ENCODE measurements at regions of chr11 and their contacts with region 1.

Region 1: DNA sequence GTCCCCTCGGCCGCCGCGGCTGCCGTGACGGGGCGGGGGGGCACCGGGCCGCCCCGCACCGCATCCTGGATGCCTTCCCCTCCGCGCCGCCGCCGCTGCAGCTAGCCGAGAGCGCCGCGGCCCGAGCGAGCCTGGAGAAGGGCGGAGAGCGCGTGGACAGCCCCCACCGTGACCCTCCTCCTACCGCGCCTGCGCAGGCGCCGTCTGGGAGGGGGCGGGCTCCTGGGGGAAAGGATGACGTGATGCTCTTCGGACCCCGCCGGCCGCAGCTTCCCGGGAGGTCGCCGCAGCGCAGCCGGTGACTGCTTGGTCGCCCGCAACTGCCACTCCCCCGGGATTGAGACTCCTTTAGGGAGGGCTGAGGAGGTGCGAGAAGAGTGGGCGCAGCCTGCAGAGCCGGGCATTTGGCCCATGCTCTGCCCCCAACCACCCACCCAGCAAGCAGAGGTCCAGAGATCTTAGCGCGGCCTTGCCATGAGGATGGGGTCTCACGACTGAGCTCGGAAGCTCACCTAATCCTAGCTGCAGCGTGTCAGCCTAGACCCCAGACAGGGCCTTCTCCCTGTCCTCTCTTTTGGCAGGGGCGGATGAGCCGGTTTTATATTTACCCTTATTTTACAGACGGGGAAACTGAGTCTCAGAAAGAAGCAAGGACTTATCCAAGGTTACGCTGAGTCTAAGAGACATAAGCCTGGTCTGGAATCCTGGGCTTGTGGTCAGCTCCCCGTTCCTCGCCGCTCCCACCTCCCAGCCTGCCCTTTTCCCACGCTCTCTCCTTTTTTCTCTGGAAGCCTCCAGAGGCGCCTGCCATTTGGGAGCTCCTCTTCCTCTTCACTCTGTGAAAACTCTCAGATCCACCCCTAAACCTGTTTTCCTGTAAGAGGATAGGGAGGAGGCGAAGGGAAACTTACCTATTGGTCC is at the start of gene DENND5A:
- DNase-seq: peak; percentile 80 to 97 (median 87)

Region 2: DNA sequence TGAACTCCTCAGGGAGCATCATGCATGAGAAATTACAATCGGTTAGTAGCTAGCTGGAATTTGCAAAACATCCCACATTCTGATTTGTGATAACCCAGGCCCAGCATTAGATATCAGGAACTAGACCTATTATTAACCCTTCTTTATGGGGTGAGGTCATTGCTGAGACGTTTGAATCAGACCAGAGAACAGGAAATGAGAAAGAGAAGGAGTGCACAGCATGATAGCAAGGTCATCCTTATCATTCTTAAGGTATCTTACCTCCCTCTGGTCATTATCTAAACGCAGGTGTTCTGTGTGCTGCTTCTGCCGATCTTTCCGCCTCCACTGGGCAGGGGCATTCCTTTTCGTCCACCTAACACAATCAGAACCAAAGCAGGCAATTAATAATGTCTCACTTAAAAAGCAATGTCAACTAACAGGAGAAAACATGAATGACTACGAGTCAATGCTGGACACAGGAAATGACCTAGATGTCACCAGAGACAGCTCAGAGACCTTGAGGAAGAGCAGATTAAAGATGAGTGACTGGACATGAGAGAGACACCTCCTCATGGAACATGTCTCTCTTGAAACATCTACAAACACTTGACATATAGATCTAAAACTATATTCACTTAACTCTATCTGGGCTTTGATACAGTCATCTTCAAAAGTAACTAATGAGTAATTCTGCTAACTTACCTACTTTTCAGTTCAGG is 95.7 kb before region 1 on chr11:
- intact Hi-C with region 1: loop called (anchors 5 kb)
- DNase-seq: no peak

Region 3: DNA sequence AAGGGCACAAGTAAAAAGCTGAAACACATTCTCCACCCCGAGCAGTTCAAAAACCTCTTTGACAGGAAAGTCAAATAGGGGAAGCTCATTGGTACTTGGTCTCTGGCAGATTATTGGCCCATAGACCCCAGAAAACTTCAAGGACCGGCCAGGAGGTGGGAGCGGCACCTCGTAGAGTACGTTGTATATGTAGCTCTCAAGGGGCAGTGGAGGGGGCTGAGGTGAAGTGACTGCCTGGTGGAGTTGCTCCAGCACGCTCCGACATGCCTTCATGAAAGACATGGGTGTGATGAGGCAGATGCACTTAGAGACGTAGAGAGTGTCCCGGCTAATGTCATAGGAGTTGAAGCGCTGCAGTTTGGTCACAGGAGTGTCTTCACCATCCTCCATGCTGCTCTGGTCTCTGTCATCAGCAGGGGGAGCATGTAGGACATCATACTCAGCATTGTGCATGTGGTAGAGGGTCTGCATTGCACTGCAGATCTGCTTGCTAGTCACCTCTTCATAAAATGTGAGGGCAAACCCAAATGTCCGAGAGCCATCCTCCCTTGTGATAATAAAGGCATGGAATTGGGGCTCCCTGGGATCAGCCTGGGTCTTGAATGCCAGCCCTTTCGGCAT is 61.7 kb before region 1 on chr11:
- intact Hi-C with region 1: loop called (anchors 2 kb)
- DNase-seq: peak in 6 of 10 donors; percentile 13 to 69 (median 28)

Region 4: DNA sequence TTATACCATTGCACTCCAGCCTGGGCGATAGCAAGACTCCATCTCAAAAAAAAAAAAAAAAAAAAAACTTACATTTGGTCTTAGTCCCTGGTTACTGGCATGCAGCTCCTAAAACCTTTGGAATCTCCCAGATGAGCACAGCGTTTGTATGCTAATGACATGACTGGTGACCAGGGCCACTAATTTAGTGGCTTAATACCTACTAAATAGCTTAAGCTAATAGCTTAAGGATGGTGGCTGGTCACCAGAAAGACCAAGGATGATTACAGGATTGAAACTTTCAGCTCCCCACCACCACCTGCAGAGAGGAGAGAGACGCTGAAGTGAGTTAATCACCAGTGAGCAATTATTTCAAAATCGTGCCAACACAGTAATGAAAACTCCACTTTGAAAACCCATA is 37.4 kb before region 1 on chr11:
- intact Hi-C with region 1: loop called (anchors 5 kb)
- DNase-seq: no peak

Region 5: GRCh38 chr11:9314291-9315036 is 49.0 kb after region 1 on chr11 and contains the start of gene TMEM41B:
- intact Hi-C with region 1: loop called (anchors 2 kb)
- DNase-seq: peak; percentile 93 to 100 (median 97)

Region 6: GRCh38 chr11:9330387-9331384 is 65.2 kb after region 1 on chr11:
- intact Hi-C with region 1: no loop called
- DNase-seq: no peak